ENCODE measurements at regions of chr4 and their contacts with region 1.

Region 1: GRCh38 chr4:52051619-52052474 is 743 bp downstream of the SPATA18 start:
- DNase-seq: peak; percentile 31
- ATAC-seq: peak; percentile 43
- H3K4me3 Mint-ChIP-seq: peak overlapping the region; percentile 88
- H3K27ac Mint-ChIP-seq: peak overlapping the region; percentile 51
- H3K4me1 Mint-ChIP-seq: peaks cover 26% of the 10 kb centered on the region
- H3K27me3 Mint-ChIP-seq: peaks cover 36% of the 10 kb centered on the region
- CTCF ChIP-seq: no peak

Region 2: GRCh38 chr4:52038103-52038912 is 13.5 kb before region 1 on chr4 and contains the start of gene SGCB:
- CTCF ChIA-PET with region 1: no interaction called
- POLR2A ChIA-PET with region 1: interaction called, 5 read pairs
- intact Hi-C with region 1: loop called (anchors 1 kb)
- DNase-seq: peak; percentile 75
- ATAC-seq: peak; percentile 95
- H3K4me3 Mint-ChIP-seq: peak within 1 kb of the TSS; percentile 85
- H3K27ac Mint-ChIP-seq: peak within 1 kb of the TSS; percentile 64
- H3K4me1 Mint-ChIP-seq: peaks cover 24% of the 10 kb centered on the region
- H3K27me3 Mint-ChIP-seq: peaks cover 25% of the 10 kb centered on the region
- CTCF ChIP-seq: no peak
- total RNA-seq, gene SGCB: 6.5 and 10.8 TPM in 2 replicates

Region 3: GRCh38 chr4:52076731-52077130 is 24.9 kb after region 1 on chr4:
- CTCF ChIA-PET with region 1: no interaction called
- POLR2A ChIA-PET with region 1: no interaction called
- intact Hi-C with region 1: no loop called
- DNase-seq: no peak
- ATAC-seq: no peak
- H3K4me3 Mint-ChIP-seq: no peak overlapping the region
- H3K27ac Mint-ChIP-seq: no peak overlapping the region
- H3K4me1 Mint-ChIP-seq: no peaks in the 10 kb centered on the region
- H3K27me3 Mint-ChIP-seq: peaks cover 9% of the 10 kb centered on the region
- CTCF ChIP-seq: no peak

Region 4: GRCh38 chr4:52510939-52511565 is 459.2 kb after region 1 on chr4:
- CTCF ChIA-PET with region 1: no interaction called
- POLR2A ChIA-PET with region 1: no interaction called
- intact Hi-C with region 1: no loop called
- DNase-seq: no peak
- ATAC-seq: no peak
- H3K4me3 Mint-ChIP-seq: no peak overlapping the region
- H3K27ac Mint-ChIP-seq: no peak overlapping the region
- H3K4me1 Mint-ChIP-seq: no peaks in the 10 kb centered on the region
- H3K27me3 Mint-ChIP-seq: no peaks in the 10 kb centered on the region
- CTCF ChIP-seq: no peak